Panc1 (cell line): ENCODE measurements at regions of chr7 and their contacts with region 1.

Region 1: DNA sequence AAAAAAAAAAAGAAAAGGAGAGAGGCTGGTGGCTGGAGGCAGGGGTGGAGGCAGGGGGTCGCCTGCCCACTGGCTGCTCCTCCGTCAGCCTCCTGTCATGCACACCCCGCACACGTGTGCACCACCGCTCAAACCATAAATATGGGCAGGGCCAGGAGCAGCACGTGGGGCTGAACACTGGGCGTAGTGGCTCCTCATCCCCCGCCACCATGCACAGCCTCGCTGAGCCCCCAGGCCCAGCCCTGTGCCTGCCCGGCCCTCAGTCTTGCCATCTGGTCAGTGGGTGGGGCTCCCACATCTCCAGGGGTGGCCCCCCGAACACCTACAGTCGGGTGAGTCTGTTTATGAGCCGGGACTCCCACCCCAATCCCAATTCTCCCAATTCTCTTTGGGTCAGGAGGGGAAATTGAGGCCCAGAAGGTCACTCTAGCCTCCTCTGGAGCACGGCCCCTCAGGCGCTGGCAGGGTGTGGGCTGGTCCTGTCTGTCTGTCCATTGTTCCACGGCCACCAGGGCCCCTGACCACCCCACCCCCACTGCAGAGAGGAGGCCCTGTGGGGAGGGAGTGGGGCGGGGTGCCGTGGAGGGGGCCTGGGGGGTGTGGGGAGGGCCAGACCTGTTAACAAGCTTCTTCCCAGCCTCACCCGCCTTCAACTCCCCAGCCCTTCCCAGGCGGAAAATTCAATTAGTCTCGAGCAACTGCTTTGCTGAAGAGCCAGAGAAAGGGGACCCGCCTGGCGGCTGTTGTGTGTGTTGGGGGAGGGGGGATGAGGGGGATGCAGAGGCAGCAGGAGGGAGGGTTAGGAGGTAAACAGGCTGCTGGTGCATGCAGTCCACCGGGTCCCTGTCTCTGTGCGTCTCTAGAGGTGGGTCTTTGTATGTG is 19.5 kb upstream of the GRIFIN start:
- DNase-seq: no peak
- ATAC-seq: no peak
- H3K4me3 ChIP-seq: no peak overlapping the region
- H3K27ac ChIP-seq: no peak overlapping the region
- H3K4me1 ChIP-seq: peaks cover 20% of the 10 kb centered on the region
- H3K27me3 ChIP-seq: no peaks in the 10 kb centered on the region
- CTCF ChIP-seq: no peak

Region 2: DNA sequence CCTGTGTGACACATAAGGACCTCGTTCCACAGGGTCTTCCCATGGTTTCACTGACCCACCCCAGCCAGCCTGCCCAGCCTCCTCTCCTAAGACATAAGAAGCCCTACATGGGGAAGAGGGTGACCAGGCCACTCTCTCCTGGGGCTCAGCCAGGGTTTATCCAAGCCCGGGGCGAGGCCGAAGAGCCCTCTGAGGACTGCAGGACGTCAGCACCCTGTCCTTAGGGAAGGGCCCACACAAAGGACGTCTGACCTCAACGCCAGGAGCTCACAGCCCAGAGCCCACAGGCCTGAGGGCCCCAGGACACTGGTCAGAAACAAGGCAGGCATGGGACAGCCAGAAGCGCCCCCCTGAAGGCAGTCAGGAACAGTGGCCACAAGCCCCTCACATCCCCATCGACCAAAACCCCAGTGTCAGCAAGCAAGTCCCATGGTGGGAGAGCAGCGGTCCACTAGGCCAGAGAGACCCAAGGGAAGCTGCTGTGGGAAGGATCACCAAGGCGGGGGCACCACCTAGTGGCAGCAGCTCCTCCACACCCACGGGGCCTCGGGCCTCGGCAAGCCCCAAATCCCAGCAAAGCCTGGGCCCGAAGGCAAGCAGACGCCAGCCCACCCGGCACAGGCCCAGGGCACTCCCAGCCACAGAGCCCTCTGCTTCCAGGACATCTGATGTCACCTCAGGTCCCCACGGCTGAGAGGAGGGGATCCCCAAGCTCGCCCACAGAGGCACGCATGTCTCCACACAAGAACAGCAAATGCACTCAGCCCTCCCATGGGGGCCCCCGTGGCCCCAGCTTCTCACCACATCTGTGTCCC is 286.3 kb before region 1 on chr7:
- CTCF ChIA-PET with region 1: no interaction called
- POLR2A ChIA-PET with region 1: no interaction called
- in situ Hi-C with region 1: no loop called
- intact Hi-C with region 1: no loop called
- DNase-seq: peak; percentile 8
- ATAC-seq: peak; percentile 84
- H3K4me3 ChIP-seq: no peak overlapping the region
- H3K27ac ChIP-seq: no peak overlapping the region
- H3K4me1 ChIP-seq: no peaks in the 10 kb centered on the region
- H3K27me3 ChIP-seq: no peaks in the 10 kb centered on the region
- CTCF ChIP-seq: no peak; the same call in 1 of the 2 replicates

Region 3: GRCh38 chr7:2894118-2894940 is 398.7 kb after region 1 on chr7:
- CTCF ChIA-PET with region 1: interaction called, 10 read pairs
- POLR2A ChIA-PET with region 1: no interaction called
- in situ Hi-C with region 1: no loop called
- intact Hi-C with region 1: no loop called
- DNase-seq: no peak
- ATAC-seq: 0 out of 2 replicates have a peak, but pooled peaks have one; percentile 14
- H3K4me3 ChIP-seq: no peak overlapping the region
- H3K27ac ChIP-seq: no peak overlapping the region
- H3K4me1 ChIP-seq: 0 out of 2 replicates have a peak, but pooled peaks cover 3% of the 10 kb centered on the region
- H3K27me3 ChIP-seq: no peaks in the 10 kb centered on the region
- CTCF ChIP-seq: no peak

Region 4: GRCh38 chr7:3464900-3465622 is 969.4 kb after region 1 on chr7:
- CTCF ChIA-PET with region 1: no interaction called
- POLR2A ChIA-PET with region 1: interaction called, 10 read pairs
- in situ Hi-C with region 1: no loop called
- intact Hi-C with region 1: no loop called
- DNase-seq: no peak
- ATAC-seq: no peak; the same call in 1 of the 2 replicates
- H3K4me3 ChIP-seq: no peak overlapping the region
- H3K27ac ChIP-seq: no peak overlapping the region
- H3K4me1 ChIP-seq: peaks cover 12% of the 10 kb centered on the region
- H3K27me3 ChIP-seq: no peaks in the 10 kb centered on the region
- CTCF ChIP-seq: no peak